Esophagus squamous epithelium (tissue), 5 donors: ENCODE measurements at regions of chr11 and their contacts with region 1.

Region 1: GRCh38 chr11:129785383-129786111 is 30.1 kb upstream of the TMEM45B start:
- DNase-seq: no peak
- H3K4me3 ChIP-seq: no peak overlapping the region
- H3K27ac ChIP-seq: no peak overlapping the region
- H3K4me1 ChIP-seq: no peaks in the 10 kb centered on the region
- H3K27me3 ChIP-seq: no peaks in the 10 kb centered on the region
- CTCF ChIP-seq: peak in 2 of 6 experiments; percentile 11 to 47
- POLR2A ChIP-seq: no peak

Region 2: GRCh38 chr11:129853518-129854236 is 68.1 kb after region 1 on chr11:
- intact Hi-C with region 1: loop called (anchors 10 kb)
- DNase-seq: no peak
- H3K4me3 ChIP-seq: peak overlapping the region in 1 of 4 donors; percentile 3
- H3K27ac ChIP-seq: peak overlapping the region; percentile 48 to 79 (median 69)
- H3K4me1 ChIP-seq: peaks cover 15 to 33% (median 15%) of the 10 kb centered on the region in 3 donors
- H3K27me3 ChIP-seq: no peaks in the 10 kb centered on the region
- CTCF ChIP-seq: no peak
- POLR2A ChIP-seq: no peak